ENCODE measurements at regions of chr1 and their contacts with region 1.

Region 1: GRCh38 chr1:50873458-50874187 is 86.4 kb downstream of the FAF1 start:
- DNase-seq: peak; percentile 93
- H3K4me3 ChIP-seq: peak overlapping the region; percentile 32
- H3K27ac ChIP-seq: peak overlapping the region; percentile 48
- H3K4me1 ChIP-seq: peaks cover 10% of the 10 kb centered on the region
- H3K27me3 ChIP-seq: no peaks in the 10 kb centered on the region
- CTCF ChIP-seq: peak; percentile 99

Region 2: DNA sequence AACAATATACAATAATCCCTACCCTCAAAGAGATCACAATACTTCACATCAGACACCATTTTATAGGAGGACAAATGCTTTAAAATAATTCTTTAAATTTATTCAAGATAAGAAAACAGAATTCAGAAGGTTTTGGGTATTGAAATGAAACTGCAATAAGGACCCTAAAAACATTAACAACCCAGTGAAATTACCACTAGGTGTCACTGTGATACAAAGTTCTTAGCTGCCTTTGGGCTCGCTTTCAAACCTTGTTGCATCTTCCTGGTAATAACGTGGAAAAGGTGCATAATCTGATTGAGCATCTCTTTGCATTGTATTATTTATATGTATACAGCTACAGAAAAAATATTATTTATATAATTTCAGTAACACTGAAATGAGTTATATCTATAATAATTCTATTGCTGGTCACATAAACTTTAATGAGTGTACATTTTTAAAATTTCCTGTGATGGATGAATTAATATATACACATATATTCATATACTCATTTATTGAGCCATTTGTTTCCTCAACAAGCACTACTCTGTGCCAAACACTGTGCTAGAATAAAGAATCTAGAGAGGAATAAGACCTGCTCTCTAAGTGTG is 98.8 kb before region 1 on chr1:
- CTCF ChIA-PET with region 1: no interaction called
- POLR2A ChIA-PET with region 1: no interaction called
- intact Hi-C with region 1: loop called (anchors 5 kb)
- DNase-seq: peak; percentile 74
- H3K4me3 ChIP-seq: no peak overlapping the region
- H3K27ac ChIP-seq: no peak overlapping the region
- H3K4me1 ChIP-seq: no peaks in the 10 kb centered on the region
- H3K27me3 ChIP-seq: no peaks in the 10 kb centered on the region
- CTCF ChIP-seq: peak; percentile 79

Region 3: GRCh38 chr1:50968158-50968820 is 94.7 kb after region 1 on chr1:
- CTCF ChIA-PET with region 1: no interaction called
- POLR2A ChIA-PET with region 1: no interaction called
- intact Hi-C with region 1: loop called (anchors 5 kb)
- DNase-seq: peak; percentile 96
- H3K4me3 ChIP-seq: peak overlapping the region; percentile 92
- H3K27ac ChIP-seq: peak overlapping the region; percentile 97
- H3K4me1 ChIP-seq: peaks cover 19% of the 10 kb centered on the region
- H3K27me3 ChIP-seq: no peaks in the 10 kb centered on the region
- CTCF ChIP-seq: peak; percentile 50; the same call in 1 of the 2 replicates

Measured in A673 (cell line).